Activated CD8-positive, alpha-beta T cell treated with anti-CD3 and anti-CD28 coated beads, Interleukin-2, amount 10 ng/mL, durations not matched to agents 7 days and 5 days (primary cell): ENCODE measurements at regions of chr4 and their contacts with region 1.

Region 1: DNA sequence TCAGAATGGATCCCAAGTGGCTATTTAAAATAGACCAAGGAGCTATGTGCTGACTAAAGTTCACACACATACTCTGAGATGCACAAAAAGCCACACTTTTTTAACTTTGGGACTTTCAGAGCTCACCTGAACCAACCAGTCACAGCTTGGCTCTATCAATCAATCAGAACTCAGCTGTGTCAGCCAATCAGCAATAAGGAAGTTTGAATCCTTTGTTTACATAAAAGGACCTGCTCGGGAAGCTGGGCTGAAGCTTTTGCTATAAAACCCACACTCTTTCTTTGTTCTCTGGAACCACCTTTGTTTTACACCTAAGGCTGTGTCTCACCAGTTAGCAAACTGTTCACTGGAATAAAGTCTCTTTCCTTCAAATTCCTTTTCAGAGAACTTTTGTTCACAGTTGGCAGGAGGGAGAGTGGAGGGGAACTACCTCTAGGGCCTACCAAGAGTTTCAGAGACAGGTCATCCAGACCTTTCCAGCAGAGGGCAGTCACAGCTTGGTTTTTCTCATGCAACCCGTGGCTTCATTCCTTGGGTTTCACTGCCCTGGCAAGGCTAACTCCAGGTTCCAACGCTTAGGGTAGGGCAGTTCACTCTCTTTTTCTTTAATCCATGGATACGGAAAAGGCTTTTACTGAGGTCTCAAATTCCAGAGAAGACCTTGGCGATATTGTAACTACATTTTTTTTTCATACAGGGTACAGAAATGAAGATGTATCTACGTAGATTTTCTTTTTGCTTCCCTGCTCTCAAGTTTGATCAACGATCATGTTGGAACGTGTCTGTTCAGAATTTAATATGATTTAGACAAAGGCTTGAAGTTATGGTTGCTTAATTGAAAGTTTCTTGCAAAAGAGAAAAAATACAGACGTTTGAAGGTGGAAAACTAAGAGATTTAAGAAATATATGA is 80.7 kb downstream of the GPRIN3 start:
- DNase-seq: peak; percentile 87
- ATAC-seq: peak; percentile 95
- H3K4me3 Mint-ChIP-seq: no peak overlapping the region
- H3K27ac Mint-ChIP-seq: peak overlapping the region; percentile 24
- H3K4me1 Mint-ChIP-seq: peaks cover 15% of the 10 kb centered on the region
- H3K27me3 Mint-ChIP-seq: no peaks in the 10 kb centered on the region

Region 2: GRCh38 chr4:89254847-89255246 is 27.9 kb after region 1 on chr4:
- CTCF ChIA-PET with region 1: interaction called, 15 read pairs
- POLR2A ChIA-PET with region 1: no interaction called
- DNase-seq: peak; percentile 53
- ATAC-seq: peak; percentile 57
- H3K4me3 Mint-ChIP-seq: no peak overlapping the region
- H3K27ac Mint-ChIP-seq: peak overlapping the region; percentile 25
- H3K4me1 Mint-ChIP-seq: peaks cover 64% of the 10 kb centered on the region
- H3K27me3 Mint-ChIP-seq: no peaks in the 10 kb centered on the region

Region 3: DNA sequence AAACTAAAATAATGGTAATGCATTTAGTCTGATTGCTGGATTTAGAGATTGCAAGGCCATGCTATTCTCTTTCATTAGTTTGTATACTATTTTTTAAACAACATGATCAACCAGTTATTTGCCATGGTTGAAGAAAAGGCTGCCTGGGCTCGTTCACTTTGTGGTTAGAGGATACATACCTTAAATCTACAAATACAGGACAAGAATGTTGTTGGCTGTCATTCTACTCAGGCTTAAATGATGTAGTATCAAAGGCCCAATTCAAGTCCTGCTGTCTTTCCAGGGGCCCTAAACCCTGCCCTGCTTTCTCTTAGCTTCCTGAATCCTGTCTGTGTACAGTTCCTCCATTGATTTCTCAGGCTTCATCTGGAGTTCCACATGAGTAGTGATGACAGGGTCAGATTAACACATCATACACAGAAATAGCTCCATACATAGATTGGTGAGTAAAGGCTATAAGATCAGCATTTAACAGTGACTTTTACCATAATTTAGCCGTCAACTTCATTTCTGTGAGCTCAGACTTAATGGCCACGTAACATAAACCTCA is 195.6 kb after region 1 on chr4:
- CTCF ChIA-PET with region 1: interaction called, 10 read pairs
- POLR2A ChIA-PET with region 1: interaction called, 3 read pairs
- DNase-seq: no peak
- ATAC-seq: no peak
- H3K4me3 Mint-ChIP-seq: no peak overlapping the region
- H3K27ac Mint-ChIP-seq: no peak overlapping the region
- H3K4me1 Mint-ChIP-seq: no peaks in the 10 kb centered on the region
- H3K27me3 Mint-ChIP-seq: no peaks in the 10 kb centered on the region

Region 4: GRCh38 chr4:89469930-89470375 is 243.0 kb after region 1 on chr4:
- CTCF ChIA-PET with region 1: interaction called, 11 read pairs
- POLR2A ChIA-PET with region 1: no interaction called
- DNase-seq: peak; percentile 63
- ATAC-seq: peak; percentile 89
- H3K4me3 Mint-ChIP-seq: peak overlapping the region; percentile 16
- H3K27ac Mint-ChIP-seq: peak overlapping the region; percentile 77
- H3K4me1 Mint-ChIP-seq: peaks cover 22% of the 10 kb centered on the region
- H3K27me3 Mint-ChIP-seq: no peaks in the 10 kb centered on the region